PC-9 (cell line): ENCODE measurements at regions of chr3 and their contacts with region 1.

Region 1: DNA sequence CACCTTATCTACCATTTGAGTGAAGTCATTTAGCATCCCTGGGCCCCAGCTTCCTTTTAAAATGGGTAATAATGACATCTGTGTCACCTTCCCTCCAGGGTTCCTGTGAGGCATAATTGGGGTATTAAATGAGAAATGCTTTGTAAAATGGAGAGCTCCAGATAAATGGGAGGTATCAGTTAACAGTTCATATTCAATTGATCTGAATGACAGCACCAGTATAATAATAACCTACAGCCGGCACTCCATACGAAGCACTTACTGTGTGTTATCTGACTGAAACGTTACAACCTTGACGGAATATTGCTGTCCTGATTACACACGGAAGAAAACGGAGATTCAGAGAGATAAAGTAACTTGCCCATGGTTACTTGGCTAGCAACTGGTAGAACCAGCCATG is 53.6 kb downstream of the BHLHE40 start:
- DNase-seq: no peak
- H3K4me3 ChIP-seq: no peak overlapping the region
- H3K27ac ChIP-seq: no peak overlapping the region
- H3K4me1 ChIP-seq: no peaks in the 10 kb centered on the region
- H3K27me3 ChIP-seq: no peaks in the 10 kb centered on the region
- CTCF ChIP-seq: no peak

Region 2: GRCh38 chr3:4741404-4742307 is 291.2 kb before region 1 on chr3:
- CTCF ChIA-PET with region 1: no interaction called
- POLR2A ChIA-PET with region 1: interaction called, 22 read pairs
- intact Hi-C with region 1: no loop called
- DNase-seq: peak; percentile 67 to 85
- H3K4me3 ChIP-seq: no peak overlapping the region
- H3K27ac ChIP-seq: peak overlapping the region; percentile 81
- H3K4me1 ChIP-seq: peaks cover 48% of the 10 kb centered on the region
- H3K27me3 ChIP-seq: no peaks in the 10 kb centered on the region
- CTCF ChIP-seq: no peak

Region 3: GRCh38 chr3:5047764-5048163 is 14.9 kb after region 1 on chr3:
- CTCF ChIA-PET with region 1: no interaction called
- POLR2A ChIA-PET with region 1: no interaction called
- intact Hi-C with region 1: no loop called
- DNase-seq: no peak
- H3K4me3 ChIP-seq: no peak overlapping the region
- H3K27ac ChIP-seq: no peak overlapping the region
- H3K4me1 ChIP-seq: peaks cover 2% of the 10 kb centered on the region
- H3K27me3 ChIP-seq: no peaks in the 10 kb centered on the region
- CTCF ChIP-seq: no peak